ENCODE measurements at regions of chr4 and their contacts with region 1.

Region 1: DNA sequence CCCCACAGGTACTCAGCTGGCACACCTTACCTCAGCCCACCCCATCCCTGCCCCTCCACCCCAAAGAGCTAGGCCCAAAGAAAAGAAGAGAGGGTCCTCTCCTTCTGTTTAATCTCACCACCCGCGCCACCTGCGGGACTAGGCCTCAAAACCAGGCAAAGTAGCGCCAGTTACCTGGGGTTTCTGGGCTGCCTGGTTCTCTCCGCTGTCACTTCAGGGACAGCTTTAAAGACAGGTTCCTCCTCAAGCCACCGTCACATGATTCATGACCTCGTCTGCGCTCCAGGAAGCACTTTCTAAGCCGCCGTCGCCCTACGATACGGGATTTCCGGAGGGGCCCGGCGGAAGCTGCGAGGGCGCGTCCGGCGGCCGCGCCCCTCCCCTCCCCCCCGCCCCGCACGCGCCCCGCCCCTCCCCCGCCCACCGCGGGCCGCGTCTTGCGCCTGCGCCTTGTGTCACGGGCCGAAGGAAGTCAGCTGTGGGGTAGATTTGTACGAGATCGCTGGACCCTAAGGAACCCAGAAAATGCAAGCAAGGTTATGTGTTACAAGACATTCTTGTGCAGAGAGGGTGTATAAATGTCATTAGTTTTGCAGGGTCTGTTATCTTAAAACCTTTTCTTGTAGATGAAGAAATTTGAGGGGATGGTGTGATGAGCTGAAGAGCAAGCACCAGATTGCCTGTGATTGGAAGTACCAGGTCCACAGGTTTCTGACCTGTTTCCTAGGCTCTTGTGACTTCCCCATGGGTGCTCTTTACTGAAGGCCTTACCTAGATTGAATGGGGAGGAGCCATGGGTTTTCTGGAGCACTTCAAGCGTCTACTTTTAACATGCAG is at the start of gene LAMTOR3:
- DNase-seq: peak; percentile 95 to 98 (median 96)
- H3K4me3 ChIP-seq: peak within 1 kb of the TSS; percentile 72 to 99 (median 96)
- H3K4me3 Mint-ChIP-seq: peak within 1 kb of the TSS; percentile 91 to 94
- H3K27ac ChIP-seq: peak within 1 kb of the TSS; percentile 97 to 99
- H3K27ac Mint-ChIP-seq: peak within 1 kb of the TSS; percentile 97 to 99 (median 99)
- H3K4me1 ChIP-seq: peaks cover 15 to 23% of the 10 kb centered on the region in 2 donors
- H3K4me1 Mint-ChIP-seq: peaks cover 28% of the 10 kb centered on the region
- H3K27me3 ChIP-seq: no peaks in the 10 kb centered on the region
- H3K27me3 Mint-ChIP-seq: no peaks in the 10 kb centered on the region
- CTCF ChIP-seq: no peak
- polyA plus RNA-seq, gene LAMTOR3: 19.9 to 83.3 (median 62.5) TPM

Region 2: GRCh38 chr4:99855678-99856077 is 38.7 kb before region 1 on chr4:
- intact Hi-C with region 1: loop called in 1 of 2 experiments (anchors 5 kb)
- DNase-seq: peak; percentile 80 to 90 (median 89)
- H3K4me3 ChIP-seq: peak overlapping the region; percentile 7 to 66 (median 41)
- H3K4me3 Mint-ChIP-seq: peak overlapping the region in 1 of 2 donors; percentile 39
- H3K27ac ChIP-seq: peak overlapping the region; percentile 7 to 90
- H3K27ac Mint-ChIP-seq: peak overlapping the region; percentile 89 to 99 (median 97)
- H3K4me1 ChIP-seq: peaks cover 76 to 90% of the 10 kb centered on the region in 2 donors
- H3K4me1 Mint-ChIP-seq: peaks cover 80% of the 10 kb centered on the region
- H3K27me3 ChIP-seq: no peaks in the 10 kb centered on the region
- H3K27me3 Mint-ChIP-seq: peaks cover 0 to 1% (median 0%) of the 10 kb centered on the region in 3 donors
- CTCF ChIP-seq: no peak

Region 3: DNA sequence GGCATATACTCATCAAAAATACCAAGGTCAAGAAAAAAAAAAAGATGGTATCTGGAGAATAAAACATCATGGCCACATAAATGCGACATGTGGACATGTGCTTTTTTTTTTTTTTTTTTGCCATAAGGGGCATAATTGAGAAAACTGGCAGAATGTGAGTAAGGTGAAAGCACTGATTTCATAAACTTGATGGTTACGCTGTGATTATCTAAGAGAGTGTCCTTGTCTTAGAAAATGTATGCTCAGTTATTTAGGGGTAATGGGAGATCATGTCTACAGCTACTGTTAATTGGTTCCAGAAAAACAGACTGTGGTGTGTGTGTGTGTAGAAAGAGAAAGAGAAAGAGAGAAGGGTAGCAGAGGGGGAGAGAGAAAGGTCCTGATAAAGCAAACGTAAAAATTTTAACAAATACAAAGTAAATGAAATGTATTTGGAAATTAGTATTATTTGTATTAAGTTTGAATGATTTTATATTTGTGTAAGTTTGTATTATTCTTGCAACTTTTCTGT is 43.9 kb after region 1 on chr4:
- intact Hi-C with region 1: no loop called
- DNase-seq: no peak
- H3K4me3 ChIP-seq: no peak overlapping the region
- H3K4me3 Mint-ChIP-seq: no peak overlapping the region
- H3K27ac ChIP-seq: no peak overlapping the region
- H3K27ac Mint-ChIP-seq: no peak overlapping the region
- H3K4me1 ChIP-seq: peaks cover 0 to 2% of the 10 kb centered on the region in 2 donors
- H3K4me1 Mint-ChIP-seq: peaks cover 12% of the 10 kb centered on the region
- H3K27me3 ChIP-seq: no peaks in the 10 kb centered on the region
- H3K27me3 Mint-ChIP-seq: no peaks in the 10 kb centered on the region
- CTCF ChIP-seq: no peak

Region 4: DNA sequence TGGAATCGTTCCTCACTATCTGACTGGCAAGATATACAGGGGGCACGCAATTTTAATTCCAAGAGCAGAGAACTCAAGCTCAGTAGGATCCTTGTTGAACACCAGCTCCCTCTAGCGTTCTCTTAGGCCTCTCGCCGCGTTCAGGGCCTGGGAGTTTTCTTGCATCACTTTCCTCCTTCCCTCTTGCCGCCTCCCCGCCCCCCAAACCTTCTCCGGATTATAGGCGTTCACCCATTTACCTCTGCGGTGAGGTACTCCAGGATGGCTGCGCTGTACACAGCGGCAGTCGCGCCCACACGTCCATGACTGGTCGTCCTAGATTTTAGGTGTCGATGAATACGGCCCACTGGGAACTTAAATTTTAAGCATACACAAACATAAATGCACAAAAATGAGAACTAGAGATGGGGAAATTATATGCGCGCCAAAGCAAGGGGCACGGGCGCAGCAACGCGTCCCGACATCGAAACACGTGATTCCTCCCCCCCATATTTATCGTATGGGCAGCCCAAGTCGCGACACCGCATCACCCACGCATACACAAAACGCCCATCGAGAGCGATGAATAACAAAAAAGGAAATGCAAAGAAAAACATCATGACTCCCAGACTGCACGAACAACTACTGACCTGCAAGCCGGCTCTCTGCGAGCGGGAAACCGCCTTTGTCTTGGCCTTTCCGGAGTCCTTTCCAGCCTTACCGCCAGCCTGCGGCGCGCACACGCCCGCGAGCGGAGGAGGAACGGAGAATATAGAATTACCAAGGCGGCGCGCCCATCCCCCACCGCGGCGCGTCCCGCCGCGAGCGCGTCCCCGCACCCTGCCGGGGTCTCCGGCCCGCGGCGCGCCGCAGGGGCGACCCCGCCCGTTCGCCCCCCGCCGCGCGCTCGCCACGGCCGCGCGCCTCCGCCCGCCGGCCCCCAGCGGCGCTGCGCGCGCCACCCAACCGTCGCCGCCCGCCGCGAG is 54.9 kb after region 1 on chr4:
- intact Hi-C with region 1: loop called (anchors 5 kb)
- DNase-seq: peak; percentile 85 to 93 (median 88)
- H3K4me3 ChIP-seq: peak overlapping the region; percentile 58 to 82 (median 75)
- H3K4me3 Mint-ChIP-seq: no peak overlapping the region
- H3K27ac ChIP-seq: peak overlapping the region; percentile 83 to 86
- H3K27ac Mint-ChIP-seq: no peak overlapping the region
- H3K4me1 ChIP-seq: peaks cover 37 to 53% of the 10 kb centered on the region in 2 donors
- H3K4me1 Mint-ChIP-seq: peaks cover 33% of the 10 kb centered on the region
- H3K27me3 ChIP-seq: no peaks in the 10 kb centered on the region
- H3K27me3 Mint-ChIP-seq: no peaks in the 10 kb centered on the region
- CTCF ChIP-seq: peak; percentile 86

Measured in CD14-positive monocyte (primary cell).